GM10248 (cell line): ENCODE measurements at regions of chr4 and their contacts with region 1.

Region 1: DNA sequence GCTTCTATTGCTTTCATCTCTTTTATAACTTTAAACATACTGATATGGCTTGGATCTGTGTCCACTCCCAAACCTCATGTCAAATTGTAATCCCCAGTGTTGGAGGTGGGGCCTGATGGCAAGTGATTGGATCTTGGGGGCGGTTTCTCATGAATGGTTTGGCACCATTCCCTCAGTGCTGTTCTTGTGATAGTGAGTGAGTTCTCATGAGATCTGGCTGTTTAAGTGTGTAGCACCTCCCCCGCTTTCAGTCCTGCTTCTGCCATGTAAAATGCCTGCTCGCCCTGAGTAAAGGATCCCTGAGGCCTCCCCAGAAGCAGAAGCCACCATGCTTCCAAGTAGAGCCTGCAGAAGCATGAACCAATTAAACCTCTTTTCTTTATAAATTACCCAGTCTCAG is 17.7 kb downstream of the MND1 start:
- DNase-seq: no peak
- CTCF ChIP-seq: no peak

Region 2: DNA sequence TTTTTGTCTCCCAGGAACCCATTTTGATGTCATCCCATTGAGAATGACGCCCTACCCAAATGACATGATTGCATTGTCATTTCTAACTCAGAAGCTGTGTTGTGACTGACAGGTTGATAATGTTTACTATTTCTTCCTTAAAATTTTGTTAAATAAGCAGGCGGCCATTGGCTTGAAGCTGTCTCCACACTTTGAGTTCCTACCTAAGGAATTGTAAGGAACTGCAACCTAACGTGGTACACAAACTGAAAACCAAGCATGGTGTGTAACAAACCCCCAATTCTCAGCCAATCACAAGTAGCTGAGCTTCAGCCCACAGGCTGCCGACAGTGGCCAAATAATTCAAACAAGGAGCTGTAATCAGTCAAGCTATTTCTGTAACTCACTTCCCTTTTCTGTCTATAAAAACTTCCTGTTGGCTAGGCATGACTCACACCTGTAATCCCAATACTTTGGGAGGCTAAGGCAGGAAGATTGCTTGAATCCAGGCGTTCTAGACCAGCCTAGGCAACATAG is 20.6 kb before region 1 on chr4:
- CTCF ChIA-PET with region 1: no interaction called
- POLR2A ChIA-PET with region 1: no interaction called
- DNase-seq: no peak
- CTCF ChIP-seq: no peak

Region 3: DNA sequence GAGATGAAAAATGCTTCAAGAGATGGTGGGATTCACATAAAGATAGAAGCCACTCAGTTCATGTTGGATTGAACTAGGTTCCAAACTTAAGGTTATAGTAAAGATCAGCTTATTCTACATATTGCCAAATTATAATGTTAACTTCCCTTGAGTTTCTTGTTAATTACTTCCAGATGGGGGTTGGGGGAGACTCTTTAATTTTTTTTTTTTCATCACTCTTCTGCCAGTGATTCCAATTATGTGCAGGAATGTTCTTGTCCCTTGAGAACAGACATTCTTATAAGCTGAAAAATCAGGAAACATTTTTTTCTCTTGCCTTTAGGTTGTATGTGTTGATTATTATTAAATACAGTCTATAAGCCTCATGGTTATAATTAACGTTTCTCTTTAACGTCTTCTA is 12.3 kb after region 1 on chr4:
- CTCF ChIA-PET with region 1: interaction called, 23 read pairs
- POLR2A ChIA-PET with region 1: no interaction called
- DNase-seq: no peak
- CTCF ChIP-seq: no peak